ENCODE measurements at regions of chr2 and their contacts with region 1.

Region 1: GRCh38 chr2:33134086-33134771 is 187.5 kb downstream of the LTBP1 start:
- DNase-seq: peak; percentile 85
- H3K4me3 ChIP-seq: peak overlapping the region; percentile 24 to 53 (median 48)
- H3K27ac ChIP-seq: peak overlapping the region; percentile 84 to 91 (median 89)
- H3K4me1 ChIP-seq: peaks cover 0 to 73% (median 60%) of the 10 kb centered on the region in 4 donors
- H3K27me3 ChIP-seq: no peaks in the 10 kb centered on the region
- CTCF ChIP-seq: peak in 1 of 4 experiments; percentile 21
- EP300 ChIP-seq: peak in 1 of 4 donors; percentile 2
- POLR2A ChIP-seq: peak in 1 of 2 donors; percentile 69

Region 2: GRCh38 chr2:32559136-32559535 is 575.1 kb before region 1 on chr2:
- intact Hi-C with region 1: loop called (anchors 5 kb)
- DNase-seq: peak; percentile 72
- H3K4me3 ChIP-seq: no peak overlapping the region
- H3K27ac ChIP-seq: peak overlapping the region in 3 of 4 donors; percentile 49 to 61 (median 52)
- H3K4me1 ChIP-seq: peaks cover 0 to 23% (median 14%) of the 10 kb centered on the region in 4 donors
- H3K27me3 ChIP-seq: no peaks in the 10 kb centered on the region
- CTCF ChIP-seq: no peak
- EP300 ChIP-seq: no peak
- POLR2A ChIP-seq: no peak

Region 3: DNA sequence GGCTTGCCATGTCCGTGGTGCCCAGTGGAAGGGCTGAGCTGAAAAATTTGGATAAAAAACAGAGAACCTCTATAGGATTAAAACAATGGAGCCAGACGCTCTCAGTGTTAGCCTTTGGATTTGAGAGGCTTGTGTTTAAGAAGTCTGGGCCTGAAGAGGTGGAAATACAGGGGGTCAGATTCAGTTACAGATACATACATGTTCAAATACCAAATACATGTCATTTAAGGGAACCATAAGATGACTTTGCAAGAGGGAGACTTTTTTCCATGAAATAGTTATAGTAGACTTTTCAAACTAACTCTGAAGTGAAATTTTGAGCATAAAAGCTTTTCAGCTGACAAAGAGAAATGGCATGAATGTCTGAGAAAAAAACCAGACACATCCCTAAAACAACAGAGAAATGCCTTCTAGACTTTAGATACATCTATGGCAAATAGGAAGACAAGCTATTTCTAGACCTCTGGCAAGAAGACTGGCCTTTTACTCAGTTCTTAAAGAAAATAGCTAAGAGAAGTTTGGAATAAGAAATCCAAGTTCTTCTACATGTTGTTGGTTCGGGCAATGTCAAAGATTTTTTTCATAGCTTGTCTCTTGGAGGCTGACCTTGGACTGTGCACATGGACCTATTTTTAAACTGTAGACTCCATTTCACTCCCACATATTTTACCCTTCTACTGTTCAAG is 74.6 kb before region 1 on chr2:
- intact Hi-C with region 1: loop called (anchors 5 kb)
- DNase-seq: no peak
- H3K4me3 ChIP-seq: peak overlapping the region in 1 of 4 donors; percentile 6
- H3K27ac ChIP-seq: peak overlapping the region; percentile 68 to 79 (median 76)
- H3K4me1 ChIP-seq: peaks cover 0 to 35% (median 29%) of the 10 kb centered on the region in 4 donors
- H3K27me3 ChIP-seq: no peaks in the 10 kb centered on the region
- CTCF ChIP-seq: no peak
- EP300 ChIP-seq: no peak
- POLR2A ChIP-seq: no peak

Region 4: GRCh38 chr2:33177627-33178026 is 43.4 kb after region 1 on chr2:
- intact Hi-C with region 1: no loop called
- DNase-seq: no peak
- H3K4me3 ChIP-seq: no peak overlapping the region
- H3K27ac ChIP-seq: no peak overlapping the region
- H3K4me1 ChIP-seq: peaks cover 0 to 4% (median 0%) of the 10 kb centered on the region in 4 donors
- H3K27me3 ChIP-seq: no peaks in the 10 kb centered on the region
- CTCF ChIP-seq: no peak
- EP300 ChIP-seq: no peak
- POLR2A ChIP-seq: no peak

Region 5: DNA sequence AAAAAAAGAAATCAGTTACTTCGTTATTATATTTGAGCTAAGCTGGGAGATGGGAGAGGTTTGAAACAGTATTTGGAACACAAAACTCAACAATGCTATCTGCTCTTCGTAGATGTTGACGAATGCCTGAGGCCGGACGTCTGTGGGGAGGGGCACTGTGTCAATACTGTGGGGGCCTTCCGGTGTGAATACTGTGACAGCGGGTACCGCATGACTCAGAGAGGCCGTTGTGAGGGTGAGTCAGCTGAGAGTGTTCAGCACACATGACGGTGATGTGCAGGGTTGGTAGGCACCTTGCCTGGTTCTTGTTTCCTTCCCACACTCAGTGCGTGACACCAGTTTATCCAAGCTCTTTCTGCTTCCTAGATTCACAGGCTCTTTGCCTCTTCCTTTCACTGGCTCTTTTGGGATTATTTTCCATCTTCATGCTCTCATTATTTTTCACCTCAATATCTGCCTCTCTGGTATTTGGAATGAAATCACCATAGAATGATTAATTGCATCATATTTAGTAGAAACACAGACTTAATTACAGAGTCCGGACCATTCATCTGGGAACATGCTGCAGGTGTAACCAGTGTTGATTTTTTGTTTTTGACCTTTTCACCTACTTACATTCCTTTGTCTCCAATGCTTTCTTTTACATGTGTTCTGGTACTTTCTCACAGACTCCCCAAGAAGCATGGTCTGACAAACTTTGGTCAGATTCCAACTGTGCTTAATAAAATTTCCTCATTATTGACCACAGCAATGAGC is 141.6 kb after region 1 on chr2:
- intact Hi-C with region 1: loop called (anchors 10 kb)
- DNase-seq: peak; percentile 79
- H3K4me3 ChIP-seq: no peak overlapping the region
- H3K27ac ChIP-seq: peak overlapping the region in 3 of 4 donors; percentile 65 to 88 (median 65)
- H3K4me1 ChIP-seq: peaks cover 0 to 37% (median 17%) of the 10 kb centered on the region in 4 donors
- H3K27me3 ChIP-seq: no peaks in the 10 kb centered on the region
- CTCF ChIP-seq: no peak
- EP300 ChIP-seq: peak in 1 of 4 donors; percentile 51
- POLR2A ChIP-seq: no peak

Region 6: DNA sequence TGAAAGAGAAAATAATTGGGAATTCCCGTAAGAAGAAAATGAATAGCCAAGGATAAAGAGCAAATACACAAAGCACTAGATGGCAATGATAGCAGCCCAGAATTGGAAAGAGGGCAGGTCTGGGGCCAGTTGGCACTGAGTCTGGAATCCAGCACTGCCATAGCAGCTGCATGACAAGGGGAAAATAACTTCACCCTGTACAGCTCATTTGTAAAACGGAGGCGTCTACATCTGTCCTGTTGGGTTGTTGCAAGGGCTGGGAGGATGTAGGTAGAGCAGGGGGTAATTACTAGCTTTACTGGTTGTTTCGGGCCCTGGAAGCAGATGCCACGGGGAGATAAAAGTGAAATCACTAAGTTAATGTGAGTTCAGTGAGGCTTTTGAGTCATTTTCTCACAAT is 232.2 kb after region 1 on chr2:
- intact Hi-C with region 1: loop called (anchors 10 kb)
- DNase-seq: peak; percentile 72
- H3K4me3 ChIP-seq: no peak overlapping the region
- H3K27ac ChIP-seq: peak overlapping the region; percentile 39 to 81 (median 68)
- H3K4me1 ChIP-seq: peaks cover 0 to 37% (median 21%) of the 10 kb centered on the region in 4 donors
- H3K27me3 ChIP-seq: no peaks in the 10 kb centered on the region
- CTCF ChIP-seq: no peak
- EP300 ChIP-seq: no peak
- POLR2A ChIP-seq: no peak